ENCODE measurements at regions of chr11 and their contacts with region 1.

Region 1: DNA sequence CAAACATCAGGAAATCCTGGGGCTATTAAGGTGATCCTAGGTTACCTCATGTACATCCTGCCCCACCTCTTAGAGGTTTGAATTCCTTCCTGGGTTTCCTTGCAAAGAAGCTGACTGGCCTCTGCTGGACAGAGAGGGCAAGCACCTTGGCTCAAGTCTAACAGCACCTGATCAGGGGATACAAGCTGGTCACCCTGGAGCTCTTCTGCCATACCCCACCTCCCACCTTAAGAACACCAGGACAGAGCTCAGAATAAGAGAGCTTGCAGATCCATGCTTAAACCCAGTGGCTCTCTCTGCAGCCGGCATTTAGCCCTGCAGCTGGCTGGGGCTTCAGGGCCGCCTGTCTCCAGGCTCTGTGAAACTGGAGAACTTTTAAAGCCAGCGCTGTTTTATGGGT is 386.6 kb upstream of the NARS2 start:
- DNase-seq: peak; percentile 69 to 70
- H3K4me3 ChIP-seq: no peak overlapping the region
- H3K4me3 Mint-ChIP-seq: no peak overlapping the region
- H3K27ac Mint-ChIP-seq: no peak overlapping the region
- H3K4me1 ChIP-seq: no peaks in the 10 kb centered on the region
- H3K4me1 Mint-ChIP-seq: no peaks in the 10 kb centered on the region
- H3K27me3 ChIP-seq: 0 out of 2 replicates have a peak, but pooled peaks cover 1% of the 10 kb centered on the region
- H3K27me3 Mint-ChIP-seq: peaks cover 7% of the 10 kb centered on the region
- CTCF ChIP-seq: peak; percentile 73 to 84

Region 2: GRCh38 chr11:78715639-78716311 is 245.5 kb before region 1 on chr11:
- CTCF ChIA-PET with region 1: interaction called, 9 read pairs
- POLR2A ChIA-PET with region 1: no interaction called
- intact Hi-C with region 1: loop called (anchors 1 kb)
- DNase-seq: peak; percentile 85 to 88
- H3K4me3 ChIP-seq: no peak overlapping the region
- H3K4me3 Mint-ChIP-seq: no peak overlapping the region
- H3K27ac Mint-ChIP-seq: no peak overlapping the region
- H3K4me1 ChIP-seq: no peaks in the 10 kb centered on the region
- H3K4me1 Mint-ChIP-seq: no peaks in the 10 kb centered on the region
- H3K27me3 ChIP-seq: no peaks in the 10 kb centered on the region; the same call in 1 of the 2 replicates
- H3K27me3 Mint-ChIP-seq: peaks cover 16% of the 10 kb centered on the region
- CTCF ChIP-seq: peak; percentile 98 to 99

Region 3: GRCh38 chr11:78798660-78799059 is 162.6 kb before region 1 on chr11:
- CTCF ChIA-PET with region 1: interaction called, 5 read pairs
- POLR2A ChIA-PET with region 1: no interaction called
- intact Hi-C with region 1: loop called (anchors 1 kb)
- DNase-seq: peak; percentile 74 to 83
- H3K4me3 ChIP-seq: no peak overlapping the region
- H3K4me3 Mint-ChIP-seq: no peak overlapping the region
- H3K27ac Mint-ChIP-seq: no peak overlapping the region
- H3K4me1 ChIP-seq: peaks cover 8% of the 10 kb centered on the region; the same call in 1 of the 2 replicates
- H3K4me1 Mint-ChIP-seq: peaks cover 17% of the 10 kb centered on the region
- H3K27me3 ChIP-seq: no peaks in the 10 kb centered on the region
- H3K27me3 Mint-ChIP-seq: no peaks in the 10 kb centered on the region
- CTCF ChIP-seq: peak; percentile 99

Region 4: DNA sequence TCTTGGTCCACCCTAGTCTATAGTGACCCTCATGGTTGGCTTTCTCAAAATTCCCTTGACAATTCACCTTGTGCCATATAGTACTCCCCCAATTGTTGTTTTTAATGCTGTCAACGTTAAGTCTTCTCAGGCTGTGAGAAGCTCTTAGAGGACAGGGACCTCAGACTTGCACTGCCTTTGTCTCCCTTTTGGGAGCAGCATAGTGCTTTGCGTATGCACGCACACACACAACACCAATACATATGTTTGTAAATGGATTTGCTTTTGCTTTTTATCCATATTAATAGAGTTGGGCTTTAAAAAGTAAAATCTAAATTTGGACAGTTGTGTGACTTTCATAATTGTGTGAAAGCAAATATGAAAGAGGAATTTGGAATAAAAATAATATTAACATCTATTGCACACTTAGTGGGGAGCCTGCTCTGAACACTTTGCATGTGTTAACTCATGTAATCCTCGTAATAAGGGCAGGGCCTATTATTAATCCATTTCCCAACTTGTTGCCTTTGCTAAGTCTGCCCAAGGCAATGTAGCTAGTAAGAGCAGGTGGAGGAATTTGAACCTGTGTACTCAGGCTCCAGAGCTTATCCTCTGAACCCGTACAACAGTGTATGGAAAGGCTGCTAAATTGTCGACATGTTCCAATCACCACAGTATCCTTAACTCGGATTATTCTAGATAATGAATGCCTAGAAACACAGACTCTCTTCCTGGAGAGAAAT is 128.9 kb before region 1 on chr11:
- CTCF ChIA-PET with region 1: no interaction called
- POLR2A ChIA-PET with region 1: interaction called, 4 read pairs
- intact Hi-C with region 1: loop called (anchors 1 kb)
- DNase-seq: no peak
- H3K4me3 ChIP-seq: no peak overlapping the region
- H3K4me3 Mint-ChIP-seq: no peak overlapping the region
- H3K27ac Mint-ChIP-seq: no peak overlapping the region
- H3K4me1 ChIP-seq: no peaks in the 10 kb centered on the region
- H3K4me1 Mint-ChIP-seq: peaks cover 6% of the 10 kb centered on the region
- H3K27me3 ChIP-seq: no peaks in the 10 kb centered on the region; the same call in 1 of the 2 replicates
- H3K27me3 Mint-ChIP-seq: peaks cover 20% of the 10 kb centered on the region
- CTCF ChIP-seq: peak in 1 of 2 experiments; percentile 22

Region 5: DNA sequence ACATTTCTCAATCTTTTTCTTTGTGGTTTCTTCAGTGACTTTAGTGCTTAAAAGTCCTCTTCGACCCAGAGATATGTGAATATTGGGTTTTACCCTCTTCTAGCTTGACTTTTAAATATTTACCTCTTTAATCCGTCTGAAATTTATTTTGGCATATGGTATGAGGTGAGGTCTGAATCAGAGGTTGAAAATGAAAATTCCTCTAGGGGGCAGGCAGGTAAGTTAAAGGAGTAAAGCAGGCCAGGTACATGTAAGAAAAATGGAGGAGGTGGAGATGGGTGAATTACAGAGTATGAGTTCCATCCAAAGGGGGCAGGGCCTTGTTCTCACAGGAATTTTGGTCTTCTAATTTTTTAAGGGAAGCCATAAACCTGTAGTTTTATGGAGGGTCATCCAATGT is 122.8 kb before region 1 on chr11:
- CTCF ChIA-PET with region 1: no interaction called
- POLR2A ChIA-PET with region 1: interaction called, 4 read pairs
- intact Hi-C with region 1: loop called (anchors 1 kb)
- DNase-seq: peak in 1 of 2 experiments; percentile 51
- H3K4me3 ChIP-seq: no peak overlapping the region
- H3K4me3 Mint-ChIP-seq: no peak overlapping the region
- H3K27ac Mint-ChIP-seq: no peak overlapping the region
- H3K4me1 ChIP-seq: no peaks in the 10 kb centered on the region
- H3K4me1 Mint-ChIP-seq: peaks cover 6% of the 10 kb centered on the region
- H3K27me3 ChIP-seq: no peaks in the 10 kb centered on the region
- H3K27me3 Mint-ChIP-seq: peaks cover 25% of the 10 kb centered on the region
- CTCF ChIP-seq: peak; percentile 62 to 69